CD8-positive, alpha-beta T cell (primary cell): ENCODE measurements at regions of chr3 and their contacts with region 1.

Region 1: DNA sequence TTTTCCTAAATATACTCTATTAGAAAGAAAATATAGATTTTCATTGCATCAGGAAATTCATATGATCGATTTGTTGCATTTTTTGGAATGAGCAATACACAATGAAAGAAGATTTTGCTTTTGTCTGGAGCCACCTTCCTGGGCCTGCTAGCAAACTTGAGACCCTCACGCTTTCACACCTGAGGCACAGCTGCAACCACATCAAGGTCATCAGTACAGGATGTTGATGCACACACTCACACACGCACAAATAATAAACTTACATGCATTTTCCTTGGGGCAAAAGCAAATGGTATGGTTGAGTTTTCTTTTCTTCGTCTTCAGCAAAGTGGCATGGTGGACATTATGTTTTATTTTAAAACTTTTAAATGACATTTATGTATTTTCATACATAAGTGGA is 64.8 kb upstream of the SATB1 start:
- DNase-seq: peak in 6 of 9 experiments; percentile 12 to 72 (median 54)
- ATAC-seq: peak; percentile 46
- H3K4me3 ChIP-seq: no peak overlapping the region
- H3K4me3 Mint-ChIP-seq: peak overlapping the region; percentile 9
- H3K27ac ChIP-seq: no peak overlapping the region
- H3K27ac Mint-ChIP-seq: peak overlapping the region; percentile 78
- H3K4me1 ChIP-seq: peaks cover 24% of the 10 kb centered on the region
- H3K4me1 Mint-ChIP-seq: peaks cover 38% of the 10 kb centered on the region
- H3K27me3 ChIP-seq: no peaks in the 10 kb centered on the region
- H3K27me3 Mint-ChIP-seq: no peaks in the 10 kb centered on the region
- CTCF ChIP-seq: no peak

Region 2: GRCh38 chr3:18454766-18455165 is 35.2 kb before region 1 on chr3:
- CTCF ChIA-PET with region 1: no interaction called
- POLR2A ChIA-PET with region 1: no interaction called
- intact Hi-C with region 1: loop called (anchors 2 to 5 kb)
- DNase-seq: no peak
- ATAC-seq: no peak
- H3K4me3 ChIP-seq: no peak overlapping the region
- H3K4me3 Mint-ChIP-seq: no peak overlapping the region
- H3K27ac ChIP-seq: no peak overlapping the region
- H3K27ac Mint-ChIP-seq: no peak overlapping the region
- H3K4me1 ChIP-seq: peaks cover 11% of the 10 kb centered on the region
- H3K4me1 Mint-ChIP-seq: peaks cover 65% of the 10 kb centered on the region
- H3K27me3 ChIP-seq: no peaks in the 10 kb centered on the region
- H3K27me3 Mint-ChIP-seq: no peaks in the 10 kb centered on the region
- CTCF ChIP-seq: no peak

Region 3: DNA sequence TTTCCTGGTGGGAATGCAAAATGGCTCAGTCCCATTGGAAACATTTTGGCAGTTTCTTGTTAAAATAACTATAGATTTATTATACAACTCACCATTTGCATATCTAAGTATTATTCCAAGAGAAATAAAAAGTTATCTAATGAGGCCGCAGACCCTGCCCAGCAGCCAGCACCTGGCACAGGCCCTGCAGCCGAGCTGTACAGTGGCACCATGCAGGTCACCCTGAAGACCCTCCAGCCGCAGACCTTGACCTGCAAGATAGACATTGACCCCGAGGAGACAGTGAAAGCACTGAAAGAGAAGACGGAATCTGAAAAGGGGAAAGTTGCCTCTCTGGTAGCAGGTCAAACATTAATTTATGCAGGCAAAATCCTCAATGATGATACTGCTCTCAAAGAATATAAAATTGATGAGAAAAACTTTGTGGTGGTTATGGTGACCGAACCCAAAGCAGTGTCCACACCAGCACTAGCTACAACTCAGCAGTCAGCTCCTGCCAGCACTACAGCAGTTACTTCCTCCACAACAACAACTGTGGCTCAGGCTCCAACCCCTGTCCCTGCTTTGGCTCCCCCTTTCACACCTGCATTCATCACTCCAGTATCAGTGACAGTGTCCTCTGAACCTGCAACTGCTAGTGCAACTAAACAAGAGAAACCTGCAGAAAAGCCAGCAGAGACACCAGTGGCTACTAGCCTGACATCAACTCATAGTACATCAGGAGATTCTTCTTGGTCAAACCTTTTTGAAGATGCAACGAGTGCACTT is 48.7 kb after region 1 on chr3:
- CTCF ChIA-PET with region 1: no interaction called
- POLR2A ChIA-PET with region 1: no interaction called
- intact Hi-C with region 1: loop called in 1 of 2 experiments (anchors 5 kb)
- DNase-seq: no peak
- ATAC-seq: no peak
- H3K4me3 ChIP-seq: no peak overlapping the region
- H3K4me3 Mint-ChIP-seq: no peak overlapping the region
- H3K27ac ChIP-seq: no peak overlapping the region
- H3K27ac Mint-ChIP-seq: no peak overlapping the region
- H3K4me1 ChIP-seq: no peaks in the 10 kb centered on the region
- H3K4me1 Mint-ChIP-seq: no peaks in the 10 kb centered on the region
- H3K27me3 ChIP-seq: no peaks in the 10 kb centered on the region
- H3K27me3 Mint-ChIP-seq: no peaks in the 10 kb centered on the region
- CTCF ChIP-seq: no peak